ENCODE measurements at regions of chr2 and their contacts with region 1.

Region 1: DNA sequence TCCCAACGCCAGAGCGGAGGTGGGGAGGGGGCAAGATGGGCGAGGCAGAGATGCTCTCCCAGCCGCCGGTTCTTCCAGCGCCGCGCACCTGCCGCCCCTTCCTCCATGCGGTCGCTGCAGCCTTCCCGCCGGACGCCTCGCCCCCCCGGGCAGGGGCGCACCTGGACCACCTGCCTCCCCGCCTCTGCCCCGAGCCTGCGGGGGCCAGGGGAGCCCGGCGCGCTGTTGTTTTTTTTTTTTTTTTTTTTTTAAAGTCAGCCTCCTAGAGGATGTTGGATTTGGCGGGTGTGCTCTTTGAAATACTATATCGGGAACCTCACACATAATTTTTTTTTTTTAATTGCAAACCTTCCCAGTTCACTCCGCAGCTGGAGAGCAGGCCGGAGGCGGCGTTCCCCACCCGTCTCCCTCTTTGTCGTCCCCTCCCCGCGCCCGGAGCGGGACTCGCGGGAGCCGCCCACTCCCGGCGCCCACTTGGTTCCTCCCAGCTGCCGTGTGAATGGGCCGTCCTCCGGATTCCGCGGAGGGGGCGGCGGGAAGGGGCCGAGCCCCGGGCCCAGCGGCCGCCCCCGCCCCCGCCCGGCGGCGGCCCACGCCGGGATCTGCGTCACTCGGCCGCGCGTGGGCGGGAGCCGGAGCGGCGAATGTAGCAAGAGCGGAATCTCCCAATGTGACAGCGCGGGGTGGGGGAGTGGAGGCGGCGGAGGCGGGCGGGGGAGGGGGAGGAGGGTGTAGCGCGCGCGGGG is 421 bp upstream of the NAB1 start:
- DNase-seq: peak; percentile 96
- H3K4me3 ChIP-seq: peak overlapping the region; percentile 54 to 96 (median 86)
- H3K27ac ChIP-seq: peak overlapping the region; percentile 59 to 98 (median 94)
- H3K4me1 ChIP-seq: peaks cover 11 to 58% (median 36%) of the 10 kb centered on the region in 6 donors
- H3K27me3 ChIP-seq: no peaks in the 10 kb centered on the region
- CTCF ChIP-seq: no peak
- POLR2A ChIP-seq: peak in 1 of 3 donors; percentile 53

Region 2: DNA sequence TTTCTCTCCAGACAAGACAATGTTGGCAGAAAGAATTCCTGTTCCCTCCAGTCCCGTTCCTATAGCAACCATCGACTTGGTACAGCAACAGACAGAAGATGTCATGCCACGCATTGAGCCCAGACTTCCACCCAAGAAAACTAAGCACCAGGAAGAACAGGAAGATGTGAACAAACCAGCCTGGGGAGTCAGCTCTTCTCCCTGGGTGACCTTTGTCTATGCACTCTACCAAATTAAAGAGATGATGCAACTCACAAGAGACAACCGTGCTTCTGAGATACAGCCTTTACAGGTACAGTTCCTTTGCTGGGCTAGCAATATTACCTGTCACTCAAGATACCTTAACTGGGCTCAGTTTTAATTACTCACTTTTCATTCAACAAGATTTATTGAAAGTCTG is 151.0 kb before region 1 on chr2:
- intact Hi-C with region 1: no loop called
- DNase-seq: no peak
- H3K4me3 ChIP-seq: no peak overlapping the region
- H3K27ac ChIP-seq: no peak overlapping the region
- H3K4me1 ChIP-seq: peaks cover 0 to 16% (median 7%) of the 10 kb centered on the region in 6 donors
- H3K27me3 ChIP-seq: no peaks in the 10 kb centered on the region
- CTCF ChIP-seq: no peak
- POLR2A ChIP-seq: no peak

Region 3: DNA sequence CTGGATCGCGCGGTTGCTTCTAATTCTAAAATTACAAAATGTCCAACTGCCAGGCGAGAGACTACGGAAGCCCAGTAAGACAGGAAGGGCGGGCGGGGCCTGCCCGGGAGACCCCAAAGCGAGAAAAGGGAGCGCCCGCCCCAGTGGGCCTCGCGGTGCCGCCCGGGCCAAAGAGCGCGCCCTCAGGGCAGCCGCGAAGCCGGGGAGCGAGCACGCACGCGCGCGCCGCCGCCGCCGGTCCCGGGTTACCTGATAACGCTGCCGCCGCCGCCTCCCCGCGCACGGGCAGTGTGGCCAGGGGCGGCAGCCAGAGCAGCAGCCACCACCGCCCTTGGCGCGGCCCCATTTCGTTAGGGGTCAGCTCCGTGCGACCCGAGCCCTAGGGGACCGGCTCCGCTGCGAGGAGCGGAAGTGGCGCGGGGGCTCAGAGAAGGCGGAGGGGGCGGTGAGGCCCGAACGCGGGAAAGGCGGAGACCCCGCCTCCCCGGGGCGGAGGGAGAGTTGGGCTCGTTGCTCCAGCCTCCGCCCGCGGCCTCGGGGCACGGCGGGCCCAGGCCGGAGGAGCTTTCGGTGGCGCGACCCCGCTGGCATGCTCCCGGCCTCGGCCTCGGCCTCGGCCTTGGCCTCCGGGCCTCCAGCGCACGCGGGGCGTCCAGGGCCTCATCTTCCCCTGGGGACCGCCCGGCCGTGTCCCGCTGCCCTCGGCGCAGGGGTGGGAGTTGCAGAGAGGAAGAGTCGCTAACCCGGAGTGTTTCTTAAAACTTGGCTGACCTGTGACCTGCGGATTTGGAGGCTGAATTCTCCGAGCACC is 113.9 kb before region 1 on chr2 and contains the start of gene NEMP2:
- intact Hi-C with region 1: loop called (anchors 10 kb)
- DNase-seq: peak; percentile 97
- H3K4me3 ChIP-seq: peak within 1 kb of the TSS; percentile 61 to 82 (median 74)
- H3K27ac ChIP-seq: peak within 1 kb of the TSS; percentile 93 to 98 (median 98)
- H3K4me1 ChIP-seq: peaks cover 3 to 64% (median 32%) of the 10 kb centered on the region in 6 donors
- H3K27me3 ChIP-seq: no peaks in the 10 kb centered on the region
- CTCF ChIP-seq: peak in 3 of 11 experiments; percentile 10 to 30 (median 14)
- POLR2A ChIP-seq: peak in 2 of 3 donors; percentile 29 to 78
- total RNA-seq, gene NEMP2: 7.7 to 19.2 (median 12.8) TPM

Region 4: GRCh38 chr2:190827720-190828119 is 179.3 kb after region 1 on chr2:
- intact Hi-C with region 1: no loop called
- DNase-seq: no peak
- H3K4me3 ChIP-seq: no peak overlapping the region
- H3K27ac ChIP-seq: no peak overlapping the region
- H3K4me1 ChIP-seq: no peaks in the 10 kb centered on the region
- H3K27me3 ChIP-seq: no peaks in the 10 kb centered on the region
- CTCF ChIP-seq: no peak
- POLR2A ChIP-seq: no peak

Measured in spleen (tissue), 13 donors.